ENCODE measurements at regions of chr21 and their contacts with region 1.

Region 1: GRCh38 chr21:44817506-44817880 is 369 bp downstream of the SUMO3 start:
- DNase-seq: peak; percentile 79 to 90 (median 90)
- H3K4me3 ChIP-seq: peak overlapping the region; percentile 48 to 79 (median 51)
- H3K4me3 Mint-ChIP-seq: peak overlapping the region; percentile 67 to 68
- H3K27ac ChIP-seq: peak overlapping the region in 1 of 2 donors; percentile 91
- H3K27ac Mint-ChIP-seq: peak overlapping the region in 1 of 7 donors; percentile 16
- H3K4me1 ChIP-seq: peaks cover 11 to 25% of the 10 kb centered on the region in 2 donors
- H3K4me1 Mint-ChIP-seq: peaks cover 20% of the 10 kb centered on the region
- H3K27me3 ChIP-seq: no peaks in the 10 kb centered on the region
- H3K27me3 Mint-ChIP-seq: peaks cover 2 to 7% (median 5%) of the 10 kb centered on the region in 3 donors
- CTCF ChIP-seq: no peak

Region 2: DNA sequence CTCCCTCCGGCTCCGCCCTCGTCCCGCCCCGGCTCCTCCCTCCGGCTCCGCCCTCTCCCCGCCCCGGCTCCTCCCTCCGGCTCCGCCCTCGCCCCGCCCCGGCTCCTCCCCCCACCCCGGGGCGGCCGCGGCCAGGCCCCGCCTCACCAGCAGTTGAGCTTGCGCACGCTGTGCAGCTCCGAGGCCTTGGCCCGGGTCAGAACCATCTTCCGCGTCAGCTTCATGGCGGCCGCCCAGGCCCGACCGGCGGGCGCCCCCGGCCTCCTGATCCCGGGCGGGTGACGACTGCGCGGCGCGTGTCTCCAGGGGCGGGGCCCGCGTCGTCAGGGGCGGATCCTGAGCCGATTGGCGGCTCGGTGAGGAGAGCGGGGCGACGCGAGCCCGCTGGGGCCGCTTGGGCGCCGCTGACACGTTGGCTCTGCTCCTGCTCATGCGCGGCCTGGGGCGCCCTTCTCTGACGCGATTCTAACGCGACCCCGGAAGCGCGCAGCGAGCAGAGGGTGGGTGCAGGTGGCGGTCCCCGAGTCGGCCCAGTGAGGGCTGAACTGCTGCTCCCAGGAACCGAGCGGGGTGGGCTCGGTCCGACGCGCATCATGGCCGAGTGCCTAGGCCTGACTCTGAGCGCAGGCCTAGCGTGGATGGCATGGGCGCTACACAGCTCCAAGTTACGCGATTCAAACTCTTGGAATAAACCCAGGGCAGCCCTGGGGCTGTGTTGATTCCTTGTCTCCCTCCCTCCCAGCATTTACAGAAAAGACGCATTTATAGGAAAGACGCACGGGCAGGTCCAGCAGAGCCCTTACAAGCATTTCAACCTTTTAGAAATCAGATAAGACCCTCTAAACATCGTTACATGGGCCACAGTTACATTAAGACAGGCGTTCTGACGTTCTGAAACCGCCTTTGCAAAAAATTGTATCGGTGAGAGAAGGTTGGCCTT is 478.3 kb before region 1 on chr21 and contains the start of gene CFAP410:
- intact Hi-C with region 1: loop called (anchors 5 kb)
- DNase-seq: peak; percentile 95 to 96 (median 95)
- H3K4me3 ChIP-seq: peak within 1 kb of the TSS; percentile 61 to 91 (median 65)
- H3K4me3 Mint-ChIP-seq: peak within 1 kb of the TSS; percentile 82 to 94
- H3K27ac ChIP-seq: peak within 1 kb of the TSS; percentile 86 to 97
- H3K27ac Mint-ChIP-seq: peak within 1 kb of the TSS; percentile 95 to 99 (median 96)
- H3K4me1 ChIP-seq: peaks cover 10 to 18% of the 10 kb centered on the region in 2 donors
- H3K4me1 Mint-ChIP-seq: peaks cover 15% of the 10 kb centered on the region
- H3K27me3 ChIP-seq: no peaks in the 10 kb centered on the region
- H3K27me3 Mint-ChIP-seq: peaks cover 4 to 10% (median 5%) of the 10 kb centered on the region in 3 donors
- CTCF ChIP-seq: no peak
- polyA plus RNA-seq, gene CFAP410: 14.8 to 23.5 (median 17.3) TPM

Region 3: DNA sequence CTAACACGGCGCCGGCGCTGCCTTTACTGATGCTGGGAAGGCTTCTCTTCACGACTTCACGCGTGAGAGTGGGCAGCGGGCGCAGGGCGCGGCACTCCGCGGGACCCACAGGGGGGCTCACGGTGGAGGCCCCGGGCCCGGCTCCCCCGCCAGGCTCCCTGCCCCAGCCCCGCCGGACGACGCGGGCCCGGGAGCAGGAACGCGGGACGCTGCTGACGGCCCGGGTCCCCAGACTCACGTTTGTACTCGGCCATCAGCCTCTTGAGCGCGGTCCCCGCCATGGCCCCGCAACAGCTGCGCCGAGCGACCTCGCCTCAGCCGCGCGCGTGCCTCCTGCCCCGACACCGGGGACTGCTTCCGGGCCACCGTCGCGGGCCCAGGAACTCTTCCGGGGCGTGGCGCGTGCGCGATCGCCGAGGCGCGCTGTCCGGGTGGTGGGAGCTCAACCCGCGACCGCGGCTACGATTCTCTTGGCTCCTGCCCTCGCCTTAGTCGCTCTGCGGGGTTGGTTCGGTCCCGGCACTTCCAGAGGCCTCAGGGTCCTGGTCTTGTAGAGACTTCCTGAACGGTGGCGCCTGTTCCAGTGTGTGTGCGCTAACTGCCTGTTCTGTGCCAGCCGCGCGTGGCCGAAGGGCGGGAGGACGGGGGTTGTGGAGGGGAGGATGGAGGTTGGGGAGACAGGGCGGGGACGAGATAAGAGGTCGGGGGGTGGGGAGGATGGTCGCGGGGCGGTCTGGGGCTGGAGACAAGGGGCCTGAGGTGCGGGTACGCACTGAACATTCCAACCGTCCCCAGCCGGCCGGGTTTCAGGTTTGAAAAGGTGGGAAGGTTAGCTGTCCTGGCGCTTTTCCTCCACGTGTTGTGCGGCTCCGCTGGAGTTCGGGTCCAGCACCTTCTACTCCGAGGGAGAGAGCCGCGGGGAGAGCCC is 15.8 kb before region 1 on chr21 and contains the start of gene UBE2G2:
- intact Hi-C with region 1: loop called in 1 of 2 experiments (anchors 2 kb)
- DNase-seq: peak; percentile 68 to 76 (median 75)
- H3K4me3 ChIP-seq: peak within 1 kb of the TSS; percentile 65 to 86 (median 73)
- H3K4me3 Mint-ChIP-seq: peak within 1 kb of the TSS; percentile 84 to 97
- H3K27ac ChIP-seq: peak within 1 kb of the TSS in 1 of 2 donors; percentile 74
- H3K27ac Mint-ChIP-seq: peak within 1 kb of the TSS; percentile 42 to 92 (median 84)
- H3K4me1 ChIP-seq: peaks cover 22 to 32% of the 10 kb centered on the region in 2 donors
- H3K4me1 Mint-ChIP-seq: peaks cover 33% of the 10 kb centered on the region
- H3K27me3 ChIP-seq: no peaks in the 10 kb centered on the region
- H3K27me3 Mint-ChIP-seq: peaks cover 0 to 2% (median 0%) of the 10 kb centered on the region in 3 donors
- CTCF ChIP-seq: peak; percentile 15
- polyA plus RNA-seq, gene UBE2G2: 22.5 to 123 (median 31.0) TPM

Region 4: GRCh38 chr21:44873356-44874239 is 56.1 kb after region 1 on chr21 and contains the start of gene PTTG1IP:
- intact Hi-C with region 1: loop called (anchors 2 to 5 kb)
- DNase-seq: peak; percentile 95 to 98 (median 95)
- H3K4me3 ChIP-seq: peak within 1 kb of the TSS; percentile 75 to 92 (median 85)
- H3K4me3 Mint-ChIP-seq: peak within 1 kb of the TSS; percentile 92 to 97
- H3K27ac ChIP-seq: peak within 1 kb of the TSS; percentile 92 to 98
- H3K27ac Mint-ChIP-seq: peak within 1 kb of the TSS; percentile 97 to 99 (median 98)
- H3K4me1 ChIP-seq: peaks cover 82 to 91% of the 10 kb centered on the region in 2 donors
- H3K4me1 Mint-ChIP-seq: peaks cover 74% of the 10 kb centered on the region
- H3K27me3 ChIP-seq: no peaks in the 10 kb centered on the region
- H3K27me3 Mint-ChIP-seq: no peaks in the 10 kb centered on the region
- CTCF ChIP-seq: no peak
- polyA plus RNA-seq, gene PTTG1IP: 118 to 238 (median 206) TPM

Region 5: DNA sequence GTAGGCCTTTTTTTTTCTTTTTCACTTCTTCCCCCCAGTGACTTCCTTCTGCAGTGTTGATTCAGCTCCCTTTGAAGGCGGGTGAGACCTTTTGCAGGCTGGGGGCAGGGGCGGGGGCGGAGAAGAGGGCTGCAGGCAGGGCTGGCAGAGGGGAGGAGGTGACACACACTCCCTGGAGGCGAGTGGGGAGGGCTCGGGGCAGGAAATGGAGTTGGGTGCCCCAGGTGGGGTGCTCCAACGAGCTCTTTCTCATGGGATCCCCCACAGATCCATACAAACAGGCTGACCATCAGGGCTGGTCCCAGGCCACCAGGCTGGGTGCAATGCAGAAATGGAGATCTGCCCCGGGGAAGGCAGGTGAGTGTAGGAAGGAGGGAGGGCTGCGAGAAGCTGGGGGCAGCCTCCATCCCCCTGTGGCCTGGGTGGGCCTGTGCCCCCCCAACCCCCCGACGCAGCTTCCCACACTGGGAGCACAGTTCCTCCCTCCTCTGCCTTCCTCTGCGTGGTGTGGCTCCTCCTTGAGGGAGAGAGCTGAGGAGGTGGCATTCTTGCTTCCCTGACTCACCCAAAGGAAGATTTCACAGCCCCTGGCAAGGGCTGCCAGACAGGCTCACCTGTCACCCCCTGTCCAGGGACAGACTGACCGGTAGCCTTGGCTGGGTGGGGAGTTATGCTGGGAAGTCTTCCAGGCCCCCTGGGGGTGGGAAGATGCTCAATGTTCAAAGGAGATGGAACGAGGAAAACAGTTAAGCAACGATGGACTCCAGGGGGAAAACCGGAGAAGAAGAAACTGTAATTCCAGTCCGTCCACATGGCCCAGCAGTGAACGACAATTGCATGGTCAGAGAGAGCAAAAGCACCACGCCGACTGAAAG is 110.3 kb after region 1 on chr21:
- intact Hi-C with region 1: loop called in 1 of 2 experiments (anchors 5 kb)
- DNase-seq: peak; percentile 39 to 74 (median 49)
- H3K4me3 ChIP-seq: peak overlapping the region; percentile 61 to 81 (median 74)
- H3K4me3 Mint-ChIP-seq: peak overlapping the region; percentile 83 to 93
- H3K27ac ChIP-seq: peak overlapping the region; percentile 79 to 84
- H3K27ac Mint-ChIP-seq: peak overlapping the region; percentile 92 to 99 (median 95)
- H3K4me1 ChIP-seq: peaks cover 89 to 96% of the 10 kb centered on the region in 2 donors
- H3K4me1 Mint-ChIP-seq: peaks cover 83% of the 10 kb centered on the region
- H3K27me3 ChIP-seq: no peaks in the 10 kb centered on the region
- H3K27me3 Mint-ChIP-seq: peaks cover 0 to 2% (median 0%) of the 10 kb centered on the region in 3 donors
- CTCF ChIP-seq: no peak

Region 6: GRCh38 chr21:45634511-45635183 is 817.2 kb after region 1 on chr21:
- intact Hi-C with region 1: loop called in 1 of 2 experiments (anchors 5 kb)
- DNase-seq: no peak
- H3K4me3 ChIP-seq: no peak overlapping the region
- H3K4me3 Mint-ChIP-seq: no peak overlapping the region
- H3K27ac ChIP-seq: no peak overlapping the region
- H3K27ac Mint-ChIP-seq: no peak overlapping the region
- H3K4me1 ChIP-seq: no peaks in the 10 kb centered on the region
- H3K4me1 Mint-ChIP-seq: no peaks in the 10 kb centered on the region
- H3K27me3 ChIP-seq: no peaks in the 10 kb centered on the region
- H3K27me3 Mint-ChIP-seq: peaks cover 0 to 4% (median 1%) of the 10 kb centered on the region in 3 donors
- CTCF ChIP-seq: no peak